ENCODE measurements at regions of chr3 and their contacts with region 1.

Region 1: DNA sequence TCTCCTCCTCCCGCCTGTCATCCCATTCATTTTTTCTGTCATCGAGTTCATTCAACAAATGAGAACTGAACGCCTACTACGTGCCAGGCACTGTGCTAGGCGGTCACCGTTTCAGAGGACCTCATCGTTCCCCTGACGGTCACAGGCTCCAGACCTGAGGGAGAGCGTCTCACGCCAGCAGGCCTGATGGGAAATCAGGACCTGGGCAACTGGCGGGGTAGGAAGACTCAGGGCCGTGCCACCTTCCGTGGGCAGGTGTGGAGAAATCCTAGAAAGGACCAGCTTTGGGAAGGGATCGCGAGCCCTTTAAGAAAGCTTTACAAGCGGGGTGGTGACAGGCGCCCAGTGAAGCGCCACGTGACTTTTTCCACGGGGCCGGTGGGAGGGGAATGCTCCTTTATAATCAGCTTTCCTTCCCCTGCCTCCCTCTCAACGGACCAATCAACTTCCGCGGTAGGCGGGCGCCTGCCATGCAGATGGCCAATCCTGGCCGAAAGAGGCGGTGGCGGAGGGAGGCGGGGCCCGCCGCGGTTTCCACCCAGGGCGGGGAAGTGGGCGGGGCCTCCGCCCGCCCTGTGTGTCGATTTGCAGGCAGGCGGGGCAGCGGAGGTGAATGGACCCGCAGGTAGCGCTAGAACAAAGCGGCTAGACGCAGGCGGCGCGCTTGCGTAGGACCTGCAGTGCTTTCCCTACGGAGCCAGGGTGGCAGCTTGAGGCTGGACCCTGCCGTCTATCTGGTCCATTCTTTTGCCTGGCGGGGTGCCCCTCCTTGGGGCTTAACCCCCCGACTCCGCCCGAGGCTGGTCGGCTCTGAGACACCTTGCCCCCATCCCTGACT is 816 bp upstream of the DUSP7 start:
- DNase-seq: peak; percentile 100
- H3K4me3 Mint-ChIP-seq: peak overlapping the region; percentile 80
- H3K27ac Mint-ChIP-seq: peak overlapping the region; percentile 80
- H3K4me1 Mint-ChIP-seq: peaks cover 32% of the 10 kb centered on the region
- H3K27me3 Mint-ChIP-seq: no peaks in the 10 kb centered on the region

Region 2: DNA sequence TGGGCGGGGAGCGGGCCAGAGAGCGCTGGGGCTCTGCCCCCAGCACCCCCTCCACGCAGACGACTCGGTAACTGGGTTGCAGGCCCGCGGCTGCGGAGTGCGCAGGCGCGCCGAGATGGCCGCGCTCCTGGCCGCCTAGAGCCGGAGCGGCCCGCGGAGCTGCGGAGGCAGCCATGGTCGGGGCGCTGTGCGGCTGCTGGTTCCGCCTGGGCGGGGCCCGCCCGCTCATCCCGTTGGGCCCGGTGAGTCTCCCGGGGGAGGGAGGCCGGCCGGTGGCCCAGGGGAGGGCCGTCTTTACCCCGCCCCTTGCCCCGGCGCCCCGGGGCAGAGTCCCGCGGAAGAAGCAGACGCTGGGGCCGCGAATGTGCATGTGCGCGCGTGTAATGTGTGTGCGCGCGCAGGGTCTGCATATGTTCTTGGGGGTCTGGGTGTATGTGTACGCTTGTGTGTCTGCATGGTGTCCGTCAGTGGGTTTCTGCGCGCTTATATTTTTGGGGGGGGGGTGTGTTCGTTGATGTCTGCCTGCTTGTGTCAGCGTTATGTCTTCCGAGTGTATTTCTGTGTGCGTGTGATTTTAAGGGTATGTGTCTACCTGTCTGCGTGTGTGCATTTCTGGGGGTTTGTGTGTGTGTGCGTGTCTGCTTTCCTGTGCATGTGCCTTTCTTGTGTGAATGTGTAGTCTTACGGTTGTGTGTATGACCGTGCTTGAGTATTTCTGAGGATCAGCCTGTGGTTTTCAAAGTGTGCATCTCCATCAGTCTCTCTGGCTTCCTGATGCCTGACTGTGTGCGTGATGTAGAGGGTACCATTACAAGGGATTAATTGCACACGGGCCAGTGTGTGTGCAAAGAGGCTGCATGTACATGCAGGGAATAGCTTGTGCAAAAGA is 82.0 kb before region 1 on chr3 and contains the start of gene ABHD14A:
- CTCF ChIA-PET with region 1: interaction called, 10 read pairs
- POLR2A ChIA-PET with region 1: interaction called, 3 read pairs
- DNase-seq: peak; percentile 74
- H3K4me3 Mint-ChIP-seq: peak within 1 kb of the TSS; percentile 98
- H3K27ac Mint-ChIP-seq: peak within 1 kb of the TSS; percentile 91
- H3K4me1 Mint-ChIP-seq: peaks cover 43% of the 10 kb centered on the region
- H3K27me3 Mint-ChIP-seq: no peaks in the 10 kb centered on the region
- total RNA-seq, gene ABHD14A: 10.8 to 13.3 TPM

Region 3: GRCh38 chr3:51995346-51996163 is 61.6 kb before region 1 on chr3 and contains the start of gene RPL29:
- CTCF ChIA-PET with region 1: interaction called, 50 read pairs
- POLR2A ChIA-PET with region 1: interaction called, 46 read pairs
- DNase-seq: peak; percentile 94
- H3K4me3 Mint-ChIP-seq: peak within 1 kb of the TSS; percentile 100
- H3K27ac Mint-ChIP-seq: peak within 1 kb of the TSS; percentile 99
- H3K4me1 Mint-ChIP-seq: peaks cover 46% of the 10 kb centered on the region
- H3K27me3 Mint-ChIP-seq: peaks cover 10% of the 10 kb centered on the region
- total RNA-seq, gene RPL29: 1,042 to 1,047 TPM

Region 4: DNA sequence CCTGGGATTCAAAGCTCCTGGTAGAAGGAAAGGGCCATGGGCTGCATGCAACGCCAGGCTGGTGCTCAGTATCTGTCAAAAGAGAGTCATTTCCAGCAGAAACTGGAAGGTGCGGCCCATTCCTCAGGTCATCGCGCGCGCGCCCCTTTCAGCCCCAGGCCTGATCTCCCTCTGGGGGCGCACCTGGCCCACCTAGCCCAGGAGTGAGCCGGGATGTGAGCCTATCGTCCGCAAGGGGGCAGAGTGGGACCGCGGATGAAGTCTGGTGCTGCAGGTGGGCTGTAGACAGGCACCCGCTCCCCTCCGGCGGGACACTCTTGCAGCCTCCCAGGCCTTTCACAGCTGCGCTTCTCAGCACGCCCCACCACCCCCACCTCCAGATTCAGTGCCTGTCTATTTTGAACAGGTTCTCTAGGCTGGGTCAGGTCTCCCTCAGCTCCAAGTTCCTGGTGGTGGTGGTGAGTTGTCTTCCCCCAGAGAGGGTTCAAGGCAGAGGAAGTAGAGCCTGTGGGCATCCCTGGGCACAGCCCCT is 55.7 kb before region 1 on chr3:
- CTCF ChIA-PET with region 1: interaction called, 50 read pairs
- POLR2A ChIA-PET with region 1: interaction called, 46 read pairs
- DNase-seq: peak; percentile 87
- H3K4me3 Mint-ChIP-seq: no peak overlapping the region
- H3K27ac Mint-ChIP-seq: no peak overlapping the region
- H3K4me1 Mint-ChIP-seq: peaks cover 20% of the 10 kb centered on the region
- H3K27me3 Mint-ChIP-seq: peaks cover 10% of the 10 kb centered on the region

Region 5: GRCh38 chr3:52041118-52041731 is 16.0 kb before region 1 on chr3:
- CTCF ChIA-PET with region 1: interaction called, 7 read pairs
- POLR2A ChIA-PET with region 1: interaction called, 12 read pairs
- DNase-seq: no peak
- H3K4me3 Mint-ChIP-seq: no peak overlapping the region
- H3K27ac Mint-ChIP-seq: no peak overlapping the region
- H3K4me1 Mint-ChIP-seq: peaks cover 2% of the 10 kb centered on the region
- H3K27me3 Mint-ChIP-seq: no peaks in the 10 kb centered on the region

Region 6: GRCh38 chr3:52123106-52123725 is 66.0 kb after region 1 on chr3:
- CTCF ChIA-PET with region 1: interaction called, 15 read pairs
- POLR2A ChIA-PET with region 1: interaction called, 6 read pairs
- DNase-seq: peak; percentile 78
- H3K4me3 Mint-ChIP-seq: no peak overlapping the region
- H3K27ac Mint-ChIP-seq: no peak overlapping the region
- H3K4me1 Mint-ChIP-seq: peaks cover 15% of the 10 kb centered on the region
- H3K27me3 Mint-ChIP-seq: no peaks in the 10 kb centered on the region

Region 7: GRCh38 chr3:52154117-52155094 is 97.2 kb after region 1 on chr3 and contains the start of gene POC1A:
- CTCF ChIA-PET with region 1: interaction called, 16 read pairs
- POLR2A ChIA-PET with region 1: interaction called, 19 read pairs
- DNase-seq: peak; percentile 91
- H3K4me3 Mint-ChIP-seq: peak within 1 kb of the TSS; percentile 85
- H3K27ac Mint-ChIP-seq: peak within 1 kb of the TSS; percentile 89
- H3K4me1 Mint-ChIP-seq: peaks cover 29% of the 10 kb centered on the region
- H3K27me3 Mint-ChIP-seq: peaks cover 2% of the 10 kb centered on the region
- total RNA-seq, gene POC1A: 24.8 to 25.6 TPM

Region 8: GRCh38 chr3:52181543-52181942 is 124.4 kb after region 1 on chr3:
- CTCF ChIA-PET with region 1: no interaction called
- POLR2A ChIA-PET with region 1: no interaction called
- DNase-seq: no peak
- H3K4me3 Mint-ChIP-seq: no peak overlapping the region
- H3K27ac Mint-ChIP-seq: no peak overlapping the region
- H3K4me1 Mint-ChIP-seq: peaks cover 16% of the 10 kb centered on the region
- H3K27me3 Mint-ChIP-seq: peaks cover 7% of the 10 kb centered on the region

Region 9: GRCh38 chr3:52428151-52429005 is 371.2 kb after region 1 on chr3:
- CTCF ChIA-PET with region 1: no interaction called
- POLR2A ChIA-PET with region 1: no interaction called
- DNase-seq: peak; percentile 44
- H3K4me3 Mint-ChIP-seq: no peak overlapping the region
- H3K27ac Mint-ChIP-seq: no peak overlapping the region
- H3K4me1 Mint-ChIP-seq: peaks cover 16% of the 10 kb centered on the region
- H3K27me3 Mint-ChIP-seq: peaks cover 6% of the 10 kb centered on the region